Dorsolateral prefrontal cortex (tissue), 120 donors: ENCODE measurements at regions of chr1 and their contacts with region 1.

Region 1: GRCh38 chr1:201703621-201704439 is 125.1 kb upstream of the IPO9 start:
- DNase-seq: peak; percentile 75 to 92 (median 84)
- H3K4me3 ChIP-seq: peak overlapping the region in 18 of 59 donors; percentile 0 to 34 (median 23)
- H3K27ac ChIP-seq: peak overlapping the region in 57 of 59 donors; percentile 12 to 89 (median 75)
- H3K27me3 ChIP-seq: no peaks in the 10 kb centered on the region
- CTCF ChIP-seq: peak in 55 of 56 donors; percentile 96 to 100 (median 99)

Region 2: GRCh38 chr1:201399352-201400126 is 304.3 kb before region 1 on chr1:
- intact Hi-C with region 1: no loop called
- DNase-seq: no peak
- H3K4me3 ChIP-seq: peak overlapping the region in 33 of 59 donors; percentile 7 to 51 (median 30)
- H3K27ac ChIP-seq: no peak overlapping the region
- H3K27me3 ChIP-seq: peaks cover 0 to 34% (median 23%) of the 10 kb centered on the region in 45 donors
- CTCF ChIP-seq: no peak

Region 3: GRCh38 chr1:201559679-201560162 is 144.1 kb before region 1 on chr1:
- intact Hi-C with region 1: loop called (anchors 1 to 2 kb)
- DNase-seq: peak; percentile 81 to 92 (median 84)
- H3K4me3 ChIP-seq: peak overlapping the region in 3 of 59 donors; percentile 12 to 42 (median 21)
- H3K27ac ChIP-seq: peak overlapping the region in 44 of 59 donors; percentile 3 to 97 (median 50)
- H3K27me3 ChIP-seq: no peaks in the 10 kb centered on the region
- CTCF ChIP-seq: peak; percentile 90 to 100 (median 98)